ENCODE measurements at regions of chr1 and their contacts with region 1.

Region 1: DNA sequence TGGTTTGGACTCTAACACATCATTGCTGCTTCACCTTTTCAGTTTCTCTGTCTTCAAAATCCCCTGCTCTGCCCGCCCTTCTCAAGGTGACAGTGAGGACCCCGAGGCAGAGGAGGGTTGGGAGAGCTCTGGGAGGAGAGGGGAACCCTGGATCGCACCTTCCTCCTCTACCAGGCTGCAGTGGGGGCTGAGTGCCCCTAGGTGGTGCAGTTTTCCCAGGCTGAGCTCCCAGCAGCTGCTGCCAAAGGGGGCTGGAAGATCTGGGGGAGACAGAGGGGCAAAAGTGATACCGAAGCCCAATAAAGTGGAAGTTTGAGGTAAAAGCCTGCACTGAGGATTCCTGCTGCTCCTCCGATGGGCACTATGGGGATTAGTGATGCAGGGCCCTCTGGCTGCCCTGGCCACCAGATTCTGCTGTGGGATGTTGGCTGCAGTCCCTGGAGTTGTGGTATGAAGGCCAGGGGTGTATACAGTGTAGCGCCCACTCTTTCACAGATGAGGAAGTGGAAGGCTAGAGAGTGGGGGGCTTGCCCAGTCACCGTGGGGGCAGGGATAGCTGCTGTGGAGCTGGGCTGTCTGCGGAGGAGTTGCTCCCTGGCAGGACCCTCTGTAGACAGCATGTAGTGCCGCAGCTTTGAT is 40.7 kb upstream of the SCMH1 start:
- DNase-seq: no peak
- ATAC-seq: peak; percentile 58

Region 2: DNA sequence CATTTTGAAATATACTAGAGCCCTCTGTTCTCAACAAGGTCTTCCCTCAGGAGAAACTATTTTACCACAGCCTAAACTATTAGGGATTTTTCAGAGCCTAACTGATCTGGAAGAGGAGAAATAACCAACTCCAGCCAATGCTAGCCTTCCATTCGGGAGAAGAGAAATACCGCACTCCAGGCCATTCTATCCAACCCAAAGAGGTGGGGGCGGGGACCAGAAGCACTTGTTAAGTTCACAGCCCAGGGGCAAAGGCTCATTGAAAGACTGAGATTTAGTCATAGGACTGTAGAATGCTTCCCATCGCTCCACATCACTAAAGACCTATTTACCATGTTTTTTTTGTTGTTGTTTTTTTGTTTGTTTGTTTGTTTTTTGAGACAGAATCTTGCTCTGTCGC is 225.9 kb before region 1 on chr1:
- intact Hi-C with region 1: no loop called
- DNase-seq: no peak
- ATAC-seq: no peak

Region 3: GRCh38 chr1:41241782-41242341 is 40.9 kb before region 1 on chr1 and contains the start of gene SCMH1:
- intact Hi-C with region 1: no loop called
- DNase-seq: peak; percentile 80
- ATAC-seq: peak; percentile 60
- total RNA-seq, gene SCMH1: 41.1 TPM

Region 4: GRCh38 chr1:41322835-41323627 is 40.2 kb after region 1 on chr1:
- intact Hi-C with region 1: loop called (anchors 5 kb)
- DNase-seq: no peak
- ATAC-seq: peak; percentile 73